Mammary epithelial cell (primary cell): ENCODE measurements at regions of chr6 and their contacts with region 1.

Region 1: DNA sequence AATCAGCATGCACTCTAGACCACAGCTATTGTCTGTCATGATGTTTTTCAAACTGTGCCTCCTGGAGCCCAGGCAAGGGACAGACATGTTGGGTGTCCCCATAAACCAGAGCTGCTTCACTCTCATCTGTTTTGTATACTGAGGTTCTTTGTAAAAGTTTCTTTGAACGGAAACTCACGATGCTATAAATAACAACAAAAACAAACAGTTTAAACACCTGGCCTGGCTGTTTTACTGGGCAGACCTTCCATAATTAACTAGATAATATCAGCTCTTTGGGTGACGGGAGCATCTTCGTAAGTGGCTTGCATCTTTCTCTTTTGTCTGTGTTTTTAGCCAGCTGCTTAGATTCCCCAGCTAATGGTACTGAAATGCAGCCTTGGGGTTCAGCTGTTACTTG is 190.3 kb downstream of the ZDHHC14 start:
- DNase-seq: no peak
- H3K4me3 ChIP-seq: no peak overlapping the region
- H3K27ac ChIP-seq: no peak overlapping the region
- H3K4me1 ChIP-seq: no peaks in the 10 kb centered on the region
- H3K27me3 ChIP-seq: no peaks in the 10 kb centered on the region
- CTCF ChIP-seq: no peak

Region 2: DNA sequence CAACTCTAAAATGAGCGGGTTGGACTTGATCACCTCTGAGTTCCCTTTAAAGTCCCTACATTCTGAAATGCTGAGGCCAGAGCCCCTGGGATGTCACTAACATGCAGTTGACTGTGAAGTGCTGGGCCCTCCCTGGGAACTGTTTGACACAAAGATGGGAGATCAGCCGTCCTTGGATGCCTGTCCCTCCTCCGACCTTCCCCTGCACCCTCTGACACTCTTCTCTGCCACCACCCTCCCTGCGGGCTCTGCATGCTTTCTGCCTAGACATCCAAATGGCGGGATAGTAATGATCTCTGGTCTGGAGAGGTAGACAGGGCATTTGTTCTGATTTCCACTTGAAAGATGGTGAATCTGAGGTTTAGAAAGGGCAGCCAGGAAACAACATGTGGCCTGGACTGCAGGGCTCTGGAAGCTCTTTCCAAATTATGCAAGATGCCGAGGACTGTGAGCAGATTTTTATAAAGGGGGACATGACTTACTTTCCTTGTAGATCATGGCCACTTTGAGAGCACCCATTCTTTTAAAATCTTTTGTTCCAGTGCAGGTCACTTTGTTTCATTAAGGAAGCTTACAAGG is 77.0 kb before region 1 on chr6:
- CTCF ChIA-PET with region 1: no interaction called
- dilution Hi-C with region 1: loop called (anchors 5 kb)
- in situ Hi-C with region 1: no loop called
- intact Hi-C with region 1: no loop called
- DNase-seq: no peak
- H3K4me3 ChIP-seq: no peak overlapping the region
- H3K27ac ChIP-seq: no peak overlapping the region
- H3K4me1 ChIP-seq: no peaks in the 10 kb centered on the region
- H3K27me3 ChIP-seq: peaks cover 3% of the 10 kb centered on the region
- CTCF ChIP-seq: no peak

Region 3: DNA sequence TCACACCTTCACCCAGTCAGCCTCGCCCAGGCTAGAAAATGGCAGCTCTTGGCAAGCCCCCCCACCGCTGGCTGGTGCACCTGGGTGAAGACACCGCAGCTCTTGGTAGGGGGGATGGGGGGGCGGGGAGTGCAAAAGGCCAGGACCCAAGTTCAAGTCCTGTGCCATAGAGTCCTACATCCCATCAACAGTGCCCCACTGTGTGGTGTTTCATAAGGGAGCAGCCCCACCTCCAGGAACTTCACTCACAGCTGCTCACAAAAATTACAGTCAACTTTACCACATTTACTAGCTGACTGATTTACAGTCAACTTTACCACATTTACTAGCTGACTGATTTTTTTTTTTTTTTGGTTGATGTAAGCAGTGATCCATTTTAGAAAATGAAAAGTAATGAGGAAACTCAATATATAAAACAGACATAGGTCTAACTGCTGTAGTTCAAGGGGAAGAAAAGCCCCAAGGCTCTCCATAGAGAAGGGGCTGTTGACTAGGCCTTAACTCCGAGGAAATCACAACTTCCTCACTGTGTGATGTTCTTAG is 42.8 kb after region 1 on chr6:
- CTCF ChIA-PET with region 1: no interaction called
- dilution Hi-C with region 1: no loop called
- in situ Hi-C with region 1: no loop called
- intact Hi-C with region 1: no loop called
- DNase-seq: peak; percentile 13
- H3K4me3 ChIP-seq: no peak overlapping the region
- H3K27ac ChIP-seq: no peak overlapping the region
- H3K4me1 ChIP-seq: peaks cover 15% of the 10 kb centered on the region
- H3K27me3 ChIP-seq: no peaks in the 10 kb centered on the region
- CTCF ChIP-seq: no peak